ENCODE measurements at regions of chr9 and their contacts with region 1.

Region 1: GRCh38 chr9:76658535-76659231 is 105.6 kb upstream of the PCA3 start:
- DNase-seq: peak; percentile 60
- H3K4me3 Mint-ChIP-seq: no peak overlapping the region
- H3K27ac Mint-ChIP-seq: no peak overlapping the region
- H3K4me1 Mint-ChIP-seq: peaks cover 34% of the 10 kb centered on the region
- H3K27me3 Mint-ChIP-seq: no peaks in the 10 kb centered on the region
- CTCF ChIP-seq: peak; percentile 60

Region 2: DNA sequence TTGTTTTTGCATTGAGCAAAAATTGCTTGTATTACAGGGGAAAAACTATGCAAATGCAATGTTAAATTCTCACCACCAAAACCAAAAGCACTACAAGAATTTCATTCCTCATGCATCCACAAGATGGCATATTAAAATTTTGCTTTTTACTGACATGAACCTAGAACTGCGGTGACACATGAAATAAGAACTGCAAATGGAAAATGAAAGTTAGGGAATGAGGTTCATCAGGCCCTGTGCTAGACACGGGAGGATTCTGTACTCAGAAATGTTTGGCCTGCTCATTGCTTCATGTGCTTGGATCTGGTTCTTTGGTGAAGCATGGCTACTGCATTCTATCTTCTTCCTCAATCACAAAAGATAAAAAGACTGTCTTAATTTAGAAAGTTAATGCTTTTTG is 255.3 kb before region 1 on chr9:
- CTCF ChIA-PET with region 1: interaction called, 7 read pairs
- POLR2A ChIA-PET with region 1: no interaction called
- intact Hi-C with region 1: loop called (anchors 1 kb)
- DNase-seq: peak; percentile 74
- H3K4me3 Mint-ChIP-seq: peak overlapping the region; percentile 55
- H3K27ac Mint-ChIP-seq: peak overlapping the region; percentile 90
- H3K4me1 Mint-ChIP-seq: no peaks in the 10 kb centered on the region
- H3K27me3 Mint-ChIP-seq: no peaks in the 10 kb centered on the region
- CTCF ChIP-seq: peak; percentile 33

Region 3: DNA sequence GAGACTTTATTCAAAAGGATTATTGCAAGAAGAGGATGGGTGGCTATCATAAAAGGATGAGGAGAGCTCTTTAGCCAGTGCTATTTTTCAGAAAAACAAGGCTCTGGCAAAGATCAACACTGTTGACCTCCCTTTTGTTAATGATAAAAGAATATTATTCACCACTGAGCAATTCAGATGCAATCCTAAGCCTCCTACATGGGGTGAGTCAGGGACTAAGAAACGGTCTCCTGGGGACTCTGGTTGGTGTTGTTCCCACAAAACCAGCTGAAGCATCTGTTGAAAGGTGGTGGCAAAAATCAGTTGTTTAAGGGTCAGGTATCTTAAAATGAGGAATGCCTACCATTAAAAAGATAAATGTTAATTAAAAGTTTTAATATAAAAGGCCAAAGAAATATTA is 207.4 kb before region 1 on chr9:
- CTCF ChIA-PET with region 1: interaction called, 226 read pairs
- POLR2A ChIA-PET with region 1: interaction called, 4 read pairs
- intact Hi-C with region 1: loop called (anchors 1 kb)
- DNase-seq: peak; percentile 40
- H3K4me3 Mint-ChIP-seq: no peak overlapping the region
- H3K27ac Mint-ChIP-seq: no peak overlapping the region
- H3K4me1 Mint-ChIP-seq: peaks cover 21% of the 10 kb centered on the region
- H3K27me3 Mint-ChIP-seq: no peaks in the 10 kb centered on the region
- CTCF ChIP-seq: no peak

Region 4: GRCh38 chr9:76687861-76688391 is 29.2 kb after region 1 on chr9:
- CTCF ChIA-PET with region 1: interaction called, 13 read pairs
- POLR2A ChIA-PET with region 1: no interaction called
- intact Hi-C with region 1: no loop called
- DNase-seq: peak; percentile 95
- H3K4me3 Mint-ChIP-seq: peak overlapping the region; percentile 35
- H3K27ac Mint-ChIP-seq: peak overlapping the region; percentile 96
- H3K4me1 Mint-ChIP-seq: peaks cover 26% of the 10 kb centered on the region
- H3K27me3 Mint-ChIP-seq: no peaks in the 10 kb centered on the region
- CTCF ChIP-seq: no peak

Region 5: DNA sequence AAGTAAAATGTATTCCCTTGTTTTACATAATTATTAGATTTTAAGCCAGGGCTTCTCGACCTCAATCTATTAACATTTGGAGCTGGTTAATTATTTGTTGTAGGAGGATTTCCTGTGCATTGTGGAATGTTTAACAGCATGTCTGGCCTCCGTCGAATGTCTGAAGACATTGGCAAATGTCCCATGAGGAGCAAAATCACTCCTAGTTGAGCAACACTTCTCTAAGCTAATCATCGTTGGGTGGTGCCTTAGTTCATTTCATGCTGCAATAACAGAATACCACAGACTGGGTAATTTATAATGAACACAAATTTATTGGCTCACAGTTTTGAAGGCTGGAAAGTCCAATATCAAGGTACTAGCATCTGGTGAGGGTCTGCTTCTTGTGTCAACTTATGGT is 505.2 kb after region 1 on chr9:
- CTCF ChIA-PET with region 1: interaction called, 4 read pairs
- POLR2A ChIA-PET with region 1: no interaction called
- intact Hi-C with region 1: loop called (anchors 10 kb)
- DNase-seq: peak; percentile 81
- H3K4me3 Mint-ChIP-seq: peak overlapping the region; percentile 46
- H3K27ac Mint-ChIP-seq: peak overlapping the region; percentile 84
- H3K4me1 Mint-ChIP-seq: peaks cover 39% of the 10 kb centered on the region
- H3K27me3 Mint-ChIP-seq: no peaks in the 10 kb centered on the region
- CTCF ChIP-seq: no peak